ENCODE measurements at regions of chr1 and their contacts with region 1.

Region 1: GRCh38 chr1:180571832-180572636 is 13.3 kb downstream of the OVAAL start:
- DNase-seq: no peak
- H3K4me3 Mint-ChIP-seq: peak overlapping the region; percentile 1
- H3K27ac Mint-ChIP-seq: peak overlapping the region; percentile 85
- H3K4me1 Mint-ChIP-seq: peaks cover 23% of the 10 kb centered on the region
- H3K27me3 Mint-ChIP-seq: peaks cover 10% of the 10 kb centered on the region

Region 2: DNA sequence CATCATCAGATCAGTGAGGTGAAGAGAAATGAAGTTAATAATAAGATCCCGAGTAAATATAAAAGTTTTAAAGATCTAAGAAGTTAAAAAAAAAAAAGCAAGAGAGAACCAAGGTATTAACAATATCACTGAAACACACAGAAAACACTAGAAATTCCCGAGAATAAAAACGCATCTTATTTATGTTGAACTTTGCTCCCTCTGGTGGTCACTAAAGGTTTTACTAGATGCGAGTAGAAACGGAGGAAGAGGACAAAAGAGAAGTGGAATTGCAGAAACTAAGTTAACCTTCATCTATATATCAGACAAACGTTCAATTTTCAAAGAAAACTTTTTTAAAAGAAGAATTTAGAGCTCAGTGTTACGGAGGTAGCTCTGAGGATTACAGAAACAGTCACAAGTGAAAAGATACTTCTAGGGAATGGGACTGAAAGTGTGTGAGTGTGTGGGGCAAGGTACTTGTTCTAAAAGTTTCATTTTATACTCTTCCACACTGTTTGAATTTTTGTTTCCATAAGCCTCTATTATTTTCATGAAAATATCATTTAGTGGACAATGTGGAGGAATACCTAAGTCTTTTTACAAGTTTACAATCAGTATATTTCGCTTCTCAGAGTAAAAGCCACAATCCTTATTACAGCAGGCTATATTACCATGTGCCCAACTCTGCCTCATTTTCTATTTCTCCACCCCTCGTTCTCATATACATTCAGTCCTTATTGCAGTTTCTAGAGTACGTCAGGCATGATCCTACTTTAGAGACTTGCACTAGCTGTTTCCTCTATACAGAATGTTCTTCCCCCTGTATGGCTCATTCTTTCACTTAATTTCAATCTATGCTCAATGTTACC is 89.4 kb before region 1 on chr1:
- intact Hi-C with region 1: no loop called
- DNase-seq: no peak
- H3K4me3 Mint-ChIP-seq: no peak overlapping the region
- H3K27ac Mint-ChIP-seq: no peak overlapping the region
- H3K4me1 Mint-ChIP-seq: peaks cover 18% of the 10 kb centered on the region
- H3K27me3 Mint-ChIP-seq: no peaks in the 10 kb centered on the region

Region 3: DNA sequence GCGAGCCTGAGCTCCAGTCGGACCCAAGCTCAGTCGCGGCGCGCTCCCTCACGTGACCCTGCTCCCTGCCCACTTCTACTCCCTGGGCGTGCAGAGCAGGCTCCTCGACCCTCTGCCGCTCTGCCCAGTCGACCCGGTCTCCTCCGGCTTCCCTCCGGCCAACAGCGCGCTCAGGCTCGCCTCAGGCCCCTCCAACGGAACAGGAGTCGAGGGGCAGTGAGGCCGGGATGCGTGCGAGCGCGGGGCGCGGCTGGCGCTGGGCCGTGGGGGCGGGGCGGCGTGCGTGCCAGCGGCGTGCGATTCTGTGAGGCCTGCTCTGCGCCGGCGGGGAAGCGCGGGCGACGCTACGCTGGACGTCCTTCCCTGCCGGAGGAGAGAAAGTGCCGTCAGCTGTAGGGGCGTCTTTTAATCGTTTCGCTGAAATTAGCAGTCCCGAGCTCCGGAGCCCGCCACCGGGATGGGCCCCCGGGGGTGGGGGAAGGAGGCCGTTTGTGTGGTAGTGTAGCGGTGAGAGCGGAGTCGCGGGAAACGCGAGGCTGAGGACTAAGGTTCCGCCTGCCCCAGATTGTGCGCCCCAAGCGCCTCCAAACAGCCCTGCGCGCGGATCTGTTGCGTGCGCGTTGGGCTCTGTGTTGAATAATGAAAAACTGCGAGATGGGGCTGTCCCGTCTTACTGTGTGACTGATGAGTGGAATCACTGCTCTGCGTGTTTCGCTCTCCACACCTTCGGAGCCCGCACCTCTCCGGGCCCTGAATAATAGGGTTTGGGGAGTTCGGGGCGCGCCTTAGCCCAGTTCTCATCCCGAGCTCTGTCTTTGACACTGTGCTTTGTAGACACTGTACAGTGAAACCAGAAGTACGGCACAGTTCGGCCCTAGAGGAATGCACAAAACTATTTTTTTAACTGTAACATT is 69.4 kb before region 1 on chr1 and contains the start of gene ACBD6:
- intact Hi-C with region 1: loop called (anchors 1 kb)
- DNase-seq: peak; percentile 81
- H3K4me3 Mint-ChIP-seq: peak within 1 kb of the TSS; percentile 97
- H3K27ac Mint-ChIP-seq: peak within 1 kb of the TSS; percentile 97
- H3K4me1 Mint-ChIP-seq: peaks cover 25% of the 10 kb centered on the region
- H3K27me3 Mint-ChIP-seq: peaks cover 3% of the 10 kb centered on the region
- total RNA-seq, gene ACBD6: 49.4 and 50.9 TPM in 2 replicates

Region 4: GRCh38 chr1:180585994-180586359 is 13.9 kb after region 1 on chr1:
- intact Hi-C with region 1: loop called (anchors 1 kb)
- DNase-seq: no peak
- H3K4me3 Mint-ChIP-seq: peak overlapping the region; percentile 70
- H3K27ac Mint-ChIP-seq: peak overlapping the region; percentile 95
- H3K4me1 Mint-ChIP-seq: peaks cover 30% of the 10 kb centered on the region
- H3K27me3 Mint-ChIP-seq: no peaks in the 10 kb centered on the region

Region 5: DNA sequence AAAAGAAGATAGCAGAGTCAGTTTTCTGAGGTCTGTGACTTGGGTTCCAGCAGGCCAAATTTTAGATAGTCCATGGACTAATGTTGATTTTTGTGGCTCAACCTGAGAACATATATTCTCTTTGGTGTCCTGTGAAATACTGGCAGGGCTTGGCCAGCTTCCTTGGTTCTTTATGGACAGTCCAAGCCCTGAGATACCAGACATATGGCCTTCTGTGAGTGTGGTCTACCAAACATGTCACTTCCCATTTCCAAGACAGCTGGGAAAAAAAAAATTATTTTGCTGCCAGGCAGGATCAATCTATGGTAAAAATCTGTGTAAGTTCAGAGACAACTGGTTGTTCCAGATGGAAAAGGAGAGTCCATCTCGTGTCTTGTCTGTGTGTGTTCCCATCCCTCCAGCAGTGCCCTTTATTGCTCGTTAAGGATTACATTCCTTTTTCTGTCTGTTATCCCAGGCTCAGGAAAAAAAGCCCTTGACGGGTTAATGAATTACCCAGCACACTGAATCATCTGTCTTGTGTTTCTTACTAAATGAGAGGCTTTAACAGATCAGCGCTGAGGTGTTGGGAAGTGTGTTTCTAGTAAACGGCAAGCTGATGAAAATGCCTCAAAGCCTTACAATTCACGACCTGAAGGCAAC is 26.4 kb after region 1 on chr1:
- intact Hi-C with region 1: no loop called
- DNase-seq: no peak
- H3K4me3 Mint-ChIP-seq: no peak overlapping the region
- H3K27ac Mint-ChIP-seq: no peak overlapping the region
- H3K4me1 Mint-ChIP-seq: no peaks in the 10 kb centered on the region
- H3K27me3 Mint-ChIP-seq: peaks cover 10% of the 10 kb centered on the region

Region 6: GRCh38 chr1:180623579-180624347 is 51.7 kb after region 1 on chr1:
- intact Hi-C with region 1: loop called (anchors 2 kb)
- DNase-seq: no peak
- H3K4me3 Mint-ChIP-seq: no peak overlapping the region
- H3K27ac Mint-ChIP-seq: no peak overlapping the region
- H3K4me1 Mint-ChIP-seq: no peaks in the 10 kb centered on the region
- H3K27me3 Mint-ChIP-seq: peaks cover 16% of the 10 kb centered on the region

Region 7: DNA sequence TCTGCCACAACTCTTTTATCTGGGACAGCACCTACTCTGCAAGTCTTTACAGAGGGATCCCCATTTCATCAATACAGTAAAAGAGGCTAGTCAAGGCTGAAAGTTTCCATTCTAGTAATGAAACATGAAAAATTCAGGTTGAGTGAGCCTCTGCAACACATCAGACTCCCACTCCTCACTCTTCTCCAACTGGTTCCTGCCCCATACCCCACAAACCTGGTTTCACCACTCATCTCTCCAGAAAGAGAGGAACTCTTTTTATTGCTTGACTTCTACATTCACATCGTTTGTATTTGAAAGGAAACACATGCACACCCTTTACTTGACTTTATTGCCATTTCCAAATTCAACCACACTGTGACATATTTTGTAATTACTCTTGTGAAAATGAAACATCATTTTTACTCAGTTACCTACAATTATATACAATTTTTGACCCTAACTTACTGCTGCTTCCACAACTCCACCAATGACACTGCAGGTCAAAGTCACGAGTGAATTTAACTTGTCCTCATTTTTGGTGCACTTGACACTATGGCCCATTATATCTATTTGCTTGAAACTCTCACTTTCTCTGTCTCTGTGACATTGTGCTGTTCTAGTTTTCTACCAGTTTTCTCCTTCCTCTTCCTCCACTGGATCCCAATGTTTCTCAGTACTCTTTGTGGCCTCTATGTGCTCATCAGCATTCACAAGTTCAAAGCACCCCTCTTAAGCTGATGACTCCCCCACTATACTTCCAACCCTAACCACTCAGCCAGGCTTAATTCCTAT is 442.6 kb after region 1 on chr1:
- intact Hi-C with region 1: loop called (anchors 2 kb)
- DNase-seq: no peak
- H3K4me3 Mint-ChIP-seq: no peak overlapping the region
- H3K27ac Mint-ChIP-seq: no peak overlapping the region
- H3K4me1 Mint-ChIP-seq: peaks cover 44% of the 10 kb centered on the region
- H3K27me3 Mint-ChIP-seq: no peaks in the 10 kb centered on the region